ENCODE measurements at regions of chr13 and their contacts with region 1.

Region 1: DNA sequence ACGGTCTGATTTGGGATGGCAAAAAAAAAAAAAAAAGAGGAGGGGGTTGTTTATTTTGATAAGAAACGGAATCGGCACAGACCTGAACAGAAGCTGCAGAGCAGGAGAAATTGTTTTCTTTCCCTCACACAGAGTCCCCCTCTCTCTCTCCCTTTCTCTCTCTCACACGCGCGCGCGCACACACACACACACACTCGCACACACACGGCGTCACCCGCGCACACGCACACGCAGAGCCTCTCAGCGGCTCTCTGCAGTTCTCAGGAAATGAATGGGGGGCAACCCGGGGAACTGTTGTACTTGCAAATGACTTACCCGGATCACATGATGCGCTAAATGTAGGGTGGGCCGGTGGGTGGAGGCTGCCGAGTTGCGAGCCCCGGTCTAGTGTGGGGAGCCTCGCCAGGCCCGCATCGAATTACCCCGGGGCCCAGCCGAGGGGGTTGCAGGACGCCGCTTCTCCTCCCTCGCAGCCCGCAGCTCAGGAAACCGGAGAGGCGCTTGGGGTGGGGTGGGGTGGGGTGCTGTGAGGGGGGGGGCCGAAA is 475 bp downstream of the KLF12 start:
- DNase-seq: peak; percentile 91
- ATAC-seq: peak; percentile 53
- H3K4me3 Mint-ChIP-seq: no peak overlapping the region
- H3K27ac Mint-ChIP-seq: peak overlapping the region; percentile 99
- H3K4me1 Mint-ChIP-seq: peaks cover 35% of the 10 kb centered on the region
- H3K27me3 Mint-ChIP-seq: no peaks in the 10 kb centered on the region

Region 2: GRCh38 chr13:73715114-73715910 is 418.4 kb before region 1 on chr13:
- CTCF ChIA-PET with region 1: no interaction called
- POLR2A ChIA-PET with region 1: no interaction called
- intact Hi-C with region 1: loop called (anchors 2 kb)
- DNase-seq: peak; percentile 68
- ATAC-seq: peak; percentile 85
- H3K4me3 Mint-ChIP-seq: peak overlapping the region; percentile 50
- H3K27ac Mint-ChIP-seq: peak overlapping the region; percentile 83
- H3K4me1 Mint-ChIP-seq: peaks cover 53% of the 10 kb centered on the region
- H3K27me3 Mint-ChIP-seq: no peaks in the 10 kb centered on the region

Region 3: GRCh38 chr13:73924607-73925006 is 209.1 kb before region 1 on chr13:
- CTCF ChIA-PET with region 1: no interaction called
- POLR2A ChIA-PET with region 1: no interaction called
- intact Hi-C with region 1: loop called in 1 of 2 experiments (anchors 5 kb)
- DNase-seq: no peak
- ATAC-seq: peak; percentile 72
- H3K4me3 Mint-ChIP-seq: no peak overlapping the region
- H3K27ac Mint-ChIP-seq: peak overlapping the region; percentile 86
- H3K4me1 Mint-ChIP-seq: peaks cover 76% of the 10 kb centered on the region
- H3K27me3 Mint-ChIP-seq: no peaks in the 10 kb centered on the region

Region 4: GRCh38 chr13:74026753-74027152 is 107.0 kb before region 1 on chr13:
- CTCF ChIA-PET with region 1: interaction called, 3 read pairs
- POLR2A ChIA-PET with region 1: no interaction called
- intact Hi-C with region 1: loop called in 1 of 2 experiments (anchors 2 kb)
- DNase-seq: peak; percentile 80
- ATAC-seq: peak; percentile 97
- H3K4me3 Mint-ChIP-seq: peak overlapping the region; percentile 74
- H3K27ac Mint-ChIP-seq: peak overlapping the region; percentile 97
- H3K4me1 Mint-ChIP-seq: peaks cover 76% of the 10 kb centered on the region
- H3K27me3 Mint-ChIP-seq: no peaks in the 10 kb centered on the region

Region 5: GRCh38 chr13:74230984-74231501 is 97.3 kb after region 1 on chr13:
- CTCF ChIA-PET with region 1: no interaction called
- POLR2A ChIA-PET with region 1: no interaction called
- intact Hi-C with region 1: loop called (anchors 1 to 5 kb)
- DNase-seq: no peak
- ATAC-seq: peak; percentile 97
- H3K4me3 Mint-ChIP-seq: peak overlapping the region; percentile 57
- H3K27ac Mint-ChIP-seq: peak overlapping the region; percentile 92
- H3K4me1 Mint-ChIP-seq: peaks cover 35% of the 10 kb centered on the region
- H3K27me3 Mint-ChIP-seq: no peaks in the 10 kb centered on the region

Region 6: DNA sequence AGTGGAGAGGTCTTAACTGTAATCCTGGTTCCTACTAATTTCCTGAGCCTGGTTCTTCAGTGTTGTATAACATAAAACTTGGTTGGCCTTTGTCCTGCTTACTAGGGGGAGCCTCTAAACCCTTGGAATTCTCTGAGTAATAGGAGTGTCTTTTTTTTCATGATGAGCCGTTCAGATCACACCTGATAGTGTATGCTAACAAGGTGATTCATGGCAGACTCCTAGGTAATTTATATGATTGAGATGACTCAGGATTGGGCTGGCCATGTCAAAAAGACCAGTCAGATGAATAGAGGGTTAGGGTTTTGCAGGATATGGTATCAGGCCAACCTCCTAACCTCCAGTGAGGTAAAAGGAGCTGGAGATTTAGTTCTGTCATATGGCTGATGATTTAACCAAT is 136.3 kb after region 1 on chr13:
- CTCF ChIA-PET with region 1: no interaction called
- POLR2A ChIA-PET with region 1: no interaction called
- intact Hi-C with region 1: no loop called
- DNase-seq: no peak
- ATAC-seq: peak; percentile 49
- H3K4me3 Mint-ChIP-seq: no peak overlapping the region
- H3K27ac Mint-ChIP-seq: no peak overlapping the region
- H3K4me1 Mint-ChIP-seq: peaks cover 3% of the 10 kb centered on the region
- H3K27me3 Mint-ChIP-seq: no peaks in the 10 kb centered on the region

Region 7: GRCh38 chr13:75319254-75319653 is 1185.5 kb after region 1 on chr13:
- CTCF ChIA-PET with region 1: no interaction called
- POLR2A ChIA-PET with region 1: no interaction called
- intact Hi-C with region 1: loop called in 1 of 2 experiments (anchors 5 kb)
- DNase-seq: no peak
- ATAC-seq: no peak
- H3K4me3 Mint-ChIP-seq: peak overlapping the region; percentile 10
- H3K27ac Mint-ChIP-seq: peak overlapping the region; percentile 95
- H3K4me1 Mint-ChIP-seq: peaks cover 69% of the 10 kb centered on the region
- H3K27me3 Mint-ChIP-seq: no peaks in the 10 kb centered on the region

Region 8: GRCh38 chr13:75537401-75538365 is 1404.0 kb after region 1 on chr13 and contains the start of gene COMMD6:
- CTCF ChIA-PET with region 1: no interaction called
- POLR2A ChIA-PET with region 1: no interaction called
- intact Hi-C with region 1: loop called in 1 of 2 experiments (anchors 5 kb)
- DNase-seq: peak; percentile 89
- ATAC-seq: peak; percentile 96
- H3K4me3 Mint-ChIP-seq: peak within 1 kb of the TSS; percentile 100
- H3K27ac Mint-ChIP-seq: peak within 1 kb of the TSS; percentile 96
- H3K4me1 Mint-ChIP-seq: peaks cover 46% of the 10 kb centered on the region
- H3K27me3 Mint-ChIP-seq: no peaks in the 10 kb centered on the region
- total RNA-seq, gene COMMD6: 103 to 121 TPM